CD8-positive, alpha-beta T cell (primary cell): ENCODE measurements at regions of chr3 and their contacts with region 1.

Region 1: GRCh38 chr3:119498186-119498987 is at the start of gene TIMMDC1:
- DNase-seq: peak; percentile 93 to 99 (median 98)
- ATAC-seq: peak; percentile 96
- H3K4me3 ChIP-seq: peak within 1 kb of the TSS; percentile 81 to 87
- H3K4me3 Mint-ChIP-seq: peak within 1 kb of the TSS; percentile 100
- H3K27ac ChIP-seq: peak within 1 kb of the TSS; percentile 92 to 95
- H3K27ac Mint-ChIP-seq: peak within 1 kb of the TSS; percentile 100
- H3K4me1 ChIP-seq: peaks cover 25% of the 10 kb centered on the region
- H3K4me1 Mint-ChIP-seq: peaks cover 40% of the 10 kb centered on the region
- H3K27me3 ChIP-seq: no peaks in the 10 kb centered on the region
- H3K27me3 Mint-ChIP-seq: no peaks in the 10 kb centered on the region
- CTCF ChIP-seq: no peak
- total RNA-seq, gene TIMMDC1: 12.1 to 16.8 TPM

Region 2: GRCh38 chr3:119293871-119294695 is 204.3 kb before region 1 on chr3 and contains the start of gene ARHGAP31:
- CTCF ChIA-PET with region 1: no interaction called
- POLR2A ChIA-PET with region 1: no interaction called
- intact Hi-C with region 1: loop called in 1 of 2 experiments (anchors 1 kb)
- DNase-seq: peak; percentile 71 to 96 (median 86)
- ATAC-seq: peak; percentile 64
- H3K4me3 ChIP-seq: peak within 1 kb of the TSS; percentile 61 to 82
- H3K4me3 Mint-ChIP-seq: peak within 1 kb of the TSS; percentile 95
- H3K27ac ChIP-seq: peak within 1 kb of the TSS; percentile 58 to 84
- H3K27ac Mint-ChIP-seq: peak within 1 kb of the TSS; percentile 98
- H3K4me1 ChIP-seq: peaks cover 30% of the 10 kb centered on the region
- H3K4me1 Mint-ChIP-seq: peaks cover 55% of the 10 kb centered on the region
- H3K27me3 ChIP-seq: no peaks in the 10 kb centered on the region
- H3K27me3 Mint-ChIP-seq: no peaks in the 10 kb centered on the region
- CTCF ChIP-seq: no peak
- total RNA-seq, gene ARHGAP31: 1.00 to 1.1 TPM

Region 3: DNA sequence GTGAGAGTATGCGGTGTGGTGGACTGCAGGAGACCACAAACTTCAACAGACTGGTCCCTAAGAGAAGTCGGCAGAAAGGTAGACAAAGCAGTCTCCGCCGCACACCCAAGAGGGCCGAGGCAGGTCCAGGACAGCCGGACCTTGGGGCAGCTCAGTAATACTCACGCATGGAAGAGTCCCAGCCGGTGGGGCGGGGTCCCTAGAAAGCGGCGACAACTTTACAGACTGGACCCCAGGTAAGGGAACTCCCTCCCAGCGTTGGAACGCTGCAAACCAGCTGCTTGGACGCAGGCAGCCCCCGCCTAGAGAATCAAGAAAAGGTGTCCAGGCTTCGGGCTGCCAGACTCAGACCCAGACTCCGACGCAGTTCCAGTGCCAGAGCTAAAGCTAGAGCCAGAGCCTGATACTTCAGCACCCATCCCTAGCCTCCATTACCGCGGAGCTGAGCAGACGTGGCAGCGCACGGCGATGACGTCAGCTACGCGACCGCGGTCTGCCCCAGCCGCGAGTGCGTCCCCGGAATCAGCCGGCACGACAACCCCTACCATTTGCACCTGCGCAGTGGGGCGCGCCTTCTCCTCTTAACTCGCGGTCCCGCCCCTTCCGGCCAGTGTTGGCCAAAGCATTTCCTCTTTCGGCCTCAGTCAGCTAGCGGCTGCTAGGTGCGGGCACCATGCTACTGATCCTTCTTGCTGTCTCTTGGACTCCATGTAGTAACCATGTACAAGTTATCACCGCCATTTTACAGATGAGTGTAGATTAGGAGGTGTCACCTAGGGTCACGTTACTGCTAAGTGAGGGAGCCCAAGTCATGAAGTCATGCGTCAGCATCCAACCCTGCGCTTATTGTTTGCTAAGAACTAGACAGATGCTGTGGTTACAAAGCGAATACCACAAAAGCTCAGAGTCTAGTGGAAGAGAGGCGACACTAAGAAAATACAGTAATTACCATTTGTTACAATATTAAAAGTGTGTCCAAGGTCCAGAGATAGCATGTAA is 34.9 kb before region 1 on chr3 and contains the start of gene TMEM39A:
- CTCF ChIA-PET with region 1: interaction called, 3 read pairs
- POLR2A ChIA-PET with region 1: interaction called, 74 read pairs
- intact Hi-C with region 1: loop called (anchors 1 kb)
- DNase-seq: peak; percentile 98 to 100 (median 99)
- ATAC-seq: peak; percentile 86
- H3K4me3 ChIP-seq: peak within 1 kb of the TSS; percentile 93 to 94
- H3K4me3 Mint-ChIP-seq: peak within 1 kb of the TSS; percentile 93
- H3K27ac ChIP-seq: peak within 1 kb of the TSS; percentile 85 to 97
- H3K27ac Mint-ChIP-seq: peak within 1 kb of the TSS; percentile 96
- H3K4me1 ChIP-seq: peaks cover 19% of the 10 kb centered on the region
- H3K4me1 Mint-ChIP-seq: peaks cover 44% of the 10 kb centered on the region
- H3K27me3 ChIP-seq: no peaks in the 10 kb centered on the region
- H3K27me3 Mint-ChIP-seq: no peaks in the 10 kb centered on the region
- CTCF ChIP-seq: no peak
- total RNA-seq, gene TMEM39A: 67.8 to 68.0 TPM

Region 4: DNA sequence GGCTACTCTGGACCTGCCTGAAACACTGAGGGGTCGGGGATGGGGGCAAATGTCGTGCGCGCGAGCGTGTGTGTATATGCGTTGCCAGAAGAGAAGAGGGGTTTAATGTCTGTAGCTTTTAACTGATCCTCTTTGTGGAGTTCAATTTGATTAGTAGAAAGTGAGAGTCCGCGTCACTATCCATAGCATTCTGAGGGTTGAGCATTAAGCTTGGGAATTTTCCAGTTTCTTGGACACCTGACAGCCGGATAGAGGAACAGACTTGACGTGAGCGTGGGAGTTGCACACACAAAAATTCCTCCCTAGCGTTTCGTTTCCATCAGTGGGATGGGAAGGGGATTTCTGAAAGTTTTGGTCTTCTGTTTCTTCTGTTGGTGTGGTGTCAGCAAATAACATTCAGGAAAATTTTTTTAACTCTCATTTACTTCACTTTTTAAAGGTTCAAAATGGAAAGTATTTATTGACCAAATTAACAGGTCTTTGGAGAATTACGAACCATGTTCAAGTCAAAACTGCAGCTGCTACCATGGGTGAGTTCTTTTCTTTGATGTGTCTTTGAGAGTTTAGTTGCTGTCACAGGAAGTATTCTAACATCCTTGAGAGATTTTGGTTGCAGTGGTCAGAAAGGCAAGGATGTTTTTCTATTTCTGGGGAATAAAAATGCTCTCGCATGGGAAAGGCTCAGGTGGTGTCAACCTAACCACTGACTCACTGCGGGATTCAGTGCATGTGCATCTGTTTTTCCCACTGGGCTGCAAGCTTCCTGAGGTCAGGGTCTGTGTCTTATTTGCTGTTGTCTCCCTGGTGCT is 28.8 kb before region 1 on chr3:
- CTCF ChIA-PET with region 1: no interaction called
- POLR2A ChIA-PET with region 1: interaction called, 74 read pairs
- intact Hi-C with region 1: loop called (anchors 1 kb)
- DNase-seq: peak in 3 of 9 experiments; percentile 20 to 46 (median 22)
- ATAC-seq: peak; percentile 32
- H3K4me3 ChIP-seq: peak overlapping the region; percentile 79 to 84
- H3K4me3 Mint-ChIP-seq: peak overlapping the region; percentile 91
- H3K27ac ChIP-seq: peak overlapping the region; percentile 67 to 72
- H3K27ac Mint-ChIP-seq: peak overlapping the region; percentile 88
- H3K4me1 ChIP-seq: peaks cover 21% of the 10 kb centered on the region
- H3K4me1 Mint-ChIP-seq: peaks cover 33% of the 10 kb centered on the region
- H3K27me3 ChIP-seq: no peaks in the 10 kb centered on the region
- H3K27me3 Mint-ChIP-seq: no peaks in the 10 kb centered on the region
- CTCF ChIP-seq: no peak

Region 5: DNA sequence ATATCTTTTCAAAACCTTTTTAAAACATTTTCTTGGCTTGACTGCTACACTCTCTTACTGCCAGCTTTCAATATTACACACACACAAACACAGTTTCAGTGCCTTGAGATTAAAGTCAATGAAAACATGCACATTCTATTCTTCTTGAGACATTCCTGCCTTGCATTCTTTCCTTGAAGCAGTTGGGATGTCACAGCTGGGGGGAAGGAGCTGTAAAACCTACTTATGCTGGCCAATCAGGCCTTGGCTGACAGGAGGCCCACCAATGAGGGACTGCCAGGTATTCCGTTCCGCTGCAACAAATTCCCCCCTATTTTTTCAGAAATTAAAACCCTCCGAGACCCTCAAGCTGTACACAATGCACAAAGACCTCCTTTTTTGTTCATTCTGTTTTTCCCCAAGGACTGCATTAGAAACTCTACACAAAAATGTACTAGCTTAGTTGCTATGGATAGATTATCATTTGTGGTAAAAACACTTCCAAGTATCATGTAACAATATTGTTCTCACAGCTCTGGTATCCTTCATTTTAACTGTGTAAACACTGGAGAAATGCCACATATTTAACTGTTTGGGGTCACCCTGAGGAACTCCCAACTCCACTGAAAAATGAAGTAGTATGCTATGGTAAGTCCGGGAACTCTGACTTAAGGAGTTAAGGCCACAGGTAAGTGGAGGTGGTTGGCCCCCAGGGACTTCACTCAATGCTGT is 933.9 kb after region 1 on chr3:
- CTCF ChIA-PET with region 1: no interaction called
- POLR2A ChIA-PET with region 1: no interaction called
- intact Hi-C with region 1: no loop called
- DNase-seq: no peak
- ATAC-seq: no peak
- H3K4me3 ChIP-seq: no peak overlapping the region
- H3K4me3 Mint-ChIP-seq: no peak overlapping the region
- H3K27ac ChIP-seq: no peak overlapping the region
- H3K27ac Mint-ChIP-seq: no peak overlapping the region
- H3K4me1 ChIP-seq: no peaks in the 10 kb centered on the region
- H3K4me1 Mint-ChIP-seq: no peaks in the 10 kb centered on the region
- H3K27me3 ChIP-seq: no peaks in the 10 kb centered on the region
- H3K27me3 Mint-ChIP-seq: peaks cover 10% of the 10 kb centered on the region
- CTCF ChIP-seq: no peak

Region 6: GRCh38 chr3:120596116-120596852 is 1097.9 kb after region 1 on chr3 and contains the start of gene NDUFB4:
- CTCF ChIA-PET with region 1: no interaction called
- POLR2A ChIA-PET with region 1: no interaction called
- intact Hi-C with region 1: loop called (anchors 10 kb)
- DNase-seq: peak; percentile 87 to 99 (median 95)
- ATAC-seq: peak; percentile 92
- H3K4me3 ChIP-seq: peak within 1 kb of the TSS; percentile 77 to 92
- H3K4me3 Mint-ChIP-seq: peak within 1 kb of the TSS; percentile 94
- H3K27ac ChIP-seq: peak within 1 kb of the TSS; percentile 91 to 95
- H3K27ac Mint-ChIP-seq: peak within 1 kb of the TSS; percentile 97
- H3K4me1 ChIP-seq: peaks cover 34% of the 10 kb centered on the region
- H3K4me1 Mint-ChIP-seq: peaks cover 12% of the 10 kb centered on the region
- H3K27me3 ChIP-seq: no peaks in the 10 kb centered on the region
- H3K27me3 Mint-ChIP-seq: no peaks in the 10 kb centered on the region
- CTCF ChIP-seq: no peak
- total RNA-seq, gene NDUFB4: 63.2 to 71.5 TPM